ENCODE measurements at regions of chr18 and their contacts with region 1.

Region 1: GRCh38 chr18:25453556-25454269 is 101.7 kb upstream of the ZNF521 start:
- DNase-seq: no peak
- ATAC-seq: no peak
- H3K4me3 ChIP-seq: no peak overlapping the region
- H3K27ac ChIP-seq: no peak overlapping the region
- H3K4me1 ChIP-seq: no peaks in the 10 kb centered on the region
- H3K27me3 ChIP-seq: no peaks in the 10 kb centered on the region

Region 2: GRCh38 chr18:25503567-25504081 is 49.9 kb after region 1 on chr18:
- intact Hi-C with region 1: no loop called
- DNase-seq: peak; percentile 60 to 75
- ATAC-seq: peak; percentile 90
- H3K4me3 ChIP-seq: peak overlapping the region; percentile 33 to 47
- H3K27ac ChIP-seq: no peak overlapping the region
- H3K4me1 ChIP-seq: no peaks in the 10 kb centered on the region
- H3K27me3 ChIP-seq: no peaks in the 10 kb centered on the region

Region 3: GRCh38 chr18:25517881-25518715 is 64.4 kb after region 1 on chr18:
- intact Hi-C with region 1: loop called in 1 of 2 experiments (anchors 10 kb)
- DNase-seq: no peak
- ATAC-seq: no peak
- H3K4me3 ChIP-seq: no peak overlapping the region
- H3K27ac ChIP-seq: no peak overlapping the region
- H3K4me1 ChIP-seq: no peaks in the 10 kb centered on the region
- H3K27me3 ChIP-seq: no peaks in the 10 kb centered on the region